Common myeloid progenitor, CD34-positive (primary cell): ENCODE measurements at regions of chr7 and their contacts with region 1.

Region 1: DNA sequence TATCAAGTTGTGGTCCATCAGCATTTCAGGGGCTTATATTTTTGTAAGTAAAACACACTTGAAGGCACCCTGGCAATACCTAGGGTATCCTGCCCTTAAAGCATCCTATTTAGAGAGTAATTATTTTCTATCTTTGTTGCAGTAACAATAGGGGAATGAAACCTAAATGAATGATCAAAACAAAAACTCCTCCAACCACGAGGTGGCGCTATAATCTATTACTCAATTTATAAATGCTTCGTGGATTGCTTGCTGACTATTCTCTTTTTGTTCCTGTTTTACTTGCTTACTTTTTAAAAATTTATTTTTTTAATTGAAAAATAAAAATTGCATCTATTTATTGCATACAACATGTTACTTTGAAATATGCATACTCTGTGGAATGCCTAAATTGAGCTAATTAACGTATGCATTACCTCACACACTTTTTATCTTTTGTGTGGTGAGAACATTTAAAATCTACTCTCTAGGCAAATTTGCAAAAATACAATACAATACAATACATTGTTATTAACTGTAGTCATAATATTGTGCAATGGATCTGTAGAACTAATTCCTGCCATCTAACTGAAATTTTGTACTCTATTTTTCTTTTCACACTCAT is 147.7 kb upstream of the BMPER start:
- DNase-seq: peak; percentile 48 to 75 (median 71)
- H3K4me3 ChIP-seq: no peak overlapping the region
- H3K27ac ChIP-seq: no peak overlapping the region
- H3K4me1 ChIP-seq: no peaks in the 10 kb centered on the region
- H3K27me3 ChIP-seq: no peaks in the 10 kb centered on the region

Region 2: GRCh38 chr7:32658034-32658944 is 1099.4 kb before region 1 on chr7:
- CTCF ChIA-PET with region 1: no interaction called
- POLR2A ChIA-PET with region 1: interaction called, 11 read pairs
- DNase-seq: no peak
- H3K4me3 ChIP-seq: no peak overlapping the region
- H3K27ac ChIP-seq: no peak overlapping the region
- H3K4me1 ChIP-seq: peaks cover 0 to 6% (median 0%) of the 10 kb centered on the region in 4 experiments
- H3K27me3 ChIP-seq: no peaks in the 10 kb centered on the region

Region 3: DNA sequence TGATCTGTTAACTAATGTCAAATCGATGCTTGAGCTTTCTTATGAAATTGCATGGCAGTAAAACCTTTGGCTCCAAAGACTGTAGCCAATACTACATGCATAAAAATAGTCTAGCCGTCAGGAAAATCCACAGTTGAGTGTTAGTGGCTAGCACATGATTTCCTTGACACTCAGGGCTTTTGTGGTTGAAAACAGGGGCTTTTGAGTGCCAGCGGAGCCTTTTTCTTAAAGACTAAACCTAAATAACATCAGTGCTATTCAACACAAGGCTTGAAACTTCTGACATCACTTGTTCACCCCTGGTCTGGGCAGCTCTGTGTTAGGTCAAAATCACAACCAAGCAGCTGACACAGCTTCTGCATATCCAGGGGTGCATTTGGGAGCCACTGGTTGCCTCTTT is 23.5 kb after region 1 on chr7:
- CTCF ChIA-PET with region 1: no interaction called
- POLR2A ChIA-PET with region 1: no interaction called
- DNase-seq: peak in 1 of 3 donors; percentile 30
- H3K4me3 ChIP-seq: no peak overlapping the region
- H3K27ac ChIP-seq: no peak overlapping the region
- H3K4me1 ChIP-seq: peaks cover 0 to 7% (median 3%) of the 10 kb centered on the region in 4 experiments
- H3K27me3 ChIP-seq: no peaks in the 10 kb centered on the region

Region 4: GRCh38 chr7:33807779-33808482 is 50.3 kb after region 1 on chr7:
- CTCF ChIA-PET with region 1: interaction called, 37 read pairs
- POLR2A ChIA-PET with region 1: no interaction called
- DNase-seq: peak; percentile 33 to 44 (median 38)
- H3K4me3 ChIP-seq: no peak overlapping the region
- H3K27ac ChIP-seq: no peak overlapping the region
- H3K4me1 ChIP-seq: peaks cover 6 to 12% (median 9%) of the 10 kb centered on the region in 4 experiments
- H3K27me3 ChIP-seq: no peaks in the 10 kb centered on the region

Region 5: GRCh38 chr7:33895025-33895804 is 137.6 kb after region 1 on chr7:
- CTCF ChIA-PET with region 1: interaction called, 61 read pairs
- POLR2A ChIA-PET with region 1: no interaction called
- DNase-seq: peak; percentile 71 to 76 (median 75)
- H3K4me3 ChIP-seq: peak overlapping the region in 1 of 7 experiments; percentile 49
- H3K27ac ChIP-seq: no peak overlapping the region
- H3K4me1 ChIP-seq: peaks cover 0 to 3% (median 0%) of the 10 kb centered on the region in 4 experiments
- H3K27me3 ChIP-seq: peaks cover 0 to 14% (median 6%) of the 10 kb centered on the region in 5 experiments

Region 6: GRCh38 chr7:33932832-33933468 is 175.3 kb after region 1 on chr7:
- CTCF ChIA-PET with region 1: interaction called, 52 read pairs
- POLR2A ChIA-PET with region 1: no interaction called
- DNase-seq: peak; percentile 74 to 89 (median 82)
- H3K4me3 ChIP-seq: no peak overlapping the region
- H3K27ac ChIP-seq: no peak overlapping the region
- H3K4me1 ChIP-seq: peaks cover 0 to 3% (median 0%) of the 10 kb centered on the region in 4 experiments
- H3K27me3 ChIP-seq: peaks cover 0 to 21% (median 14%) of the 10 kb centered on the region in 5 experiments